Thyroid gland (tissue), 4 donors: ENCODE measurements at regions of chr18 and their contacts with region 1.

Region 1: GRCh38 chr18:50878345-50879301 is at the start of gene ME2:
- DNase-seq: peak; percentile 89 to 90
- H3K4me3 ChIP-seq: peak within 1 kb of the TSS; percentile 72 to 95 (median 88)
- H3K27ac ChIP-seq: peak within 1 kb of the TSS; percentile 97
- H3K4me1 ChIP-seq: peaks cover 0 to 6% of the 10 kb centered on the region in 2 donors
- H3K27me3 ChIP-seq: no peaks in the 10 kb centered on the region
- CTCF ChIP-seq: no peak
- POLR2A ChIP-seq: peak; percentile 80 to 98
- total RNA-seq, gene ME2: 31.9 to 51.5 (median 46.4) TPM

Region 2: GRCh38 chr18:50629148-50629631 is 249.4 kb before region 1 on chr18:
- intact Hi-C with region 1: no loop called
- DNase-seq: no peak
- H3K4me3 ChIP-seq: no peak overlapping the region
- H3K27ac ChIP-seq: no peak overlapping the region
- H3K4me1 ChIP-seq: no peaks in the 10 kb centered on the region
- H3K27me3 ChIP-seq: no peaks in the 10 kb centered on the region
- CTCF ChIP-seq: no peak
- POLR2A ChIP-seq: no peak

Region 3: DNA sequence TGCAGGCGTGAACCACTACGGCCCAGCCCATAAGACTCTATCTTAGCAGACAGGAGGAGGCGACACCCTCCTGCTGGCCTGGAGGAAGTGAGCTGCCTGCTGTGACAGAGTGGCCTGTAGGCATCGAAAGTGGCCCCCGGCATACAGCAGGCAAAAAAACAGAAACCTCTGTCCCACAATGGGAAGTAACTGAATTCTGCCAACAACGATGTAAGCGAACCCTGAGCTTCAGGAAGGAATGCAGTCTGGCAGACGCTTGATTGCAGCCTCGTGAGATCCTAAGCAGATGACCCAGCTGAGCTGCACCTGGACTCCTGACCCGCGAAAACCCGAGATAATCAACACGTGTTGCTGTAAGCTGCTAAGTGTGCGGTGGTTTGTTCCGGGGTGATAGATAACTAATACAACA is 72.4 kb before region 1 on chr18:
- intact Hi-C with region 1: no loop called
- DNase-seq: no peak
- H3K4me3 ChIP-seq: no peak overlapping the region
- H3K27ac ChIP-seq: no peak overlapping the region
- H3K4me1 ChIP-seq: no peaks in the 10 kb centered on the region
- H3K27me3 ChIP-seq: no peaks in the 10 kb centered on the region
- CTCF ChIP-seq: no peak
- POLR2A ChIP-seq: no peak

Region 4: DNA sequence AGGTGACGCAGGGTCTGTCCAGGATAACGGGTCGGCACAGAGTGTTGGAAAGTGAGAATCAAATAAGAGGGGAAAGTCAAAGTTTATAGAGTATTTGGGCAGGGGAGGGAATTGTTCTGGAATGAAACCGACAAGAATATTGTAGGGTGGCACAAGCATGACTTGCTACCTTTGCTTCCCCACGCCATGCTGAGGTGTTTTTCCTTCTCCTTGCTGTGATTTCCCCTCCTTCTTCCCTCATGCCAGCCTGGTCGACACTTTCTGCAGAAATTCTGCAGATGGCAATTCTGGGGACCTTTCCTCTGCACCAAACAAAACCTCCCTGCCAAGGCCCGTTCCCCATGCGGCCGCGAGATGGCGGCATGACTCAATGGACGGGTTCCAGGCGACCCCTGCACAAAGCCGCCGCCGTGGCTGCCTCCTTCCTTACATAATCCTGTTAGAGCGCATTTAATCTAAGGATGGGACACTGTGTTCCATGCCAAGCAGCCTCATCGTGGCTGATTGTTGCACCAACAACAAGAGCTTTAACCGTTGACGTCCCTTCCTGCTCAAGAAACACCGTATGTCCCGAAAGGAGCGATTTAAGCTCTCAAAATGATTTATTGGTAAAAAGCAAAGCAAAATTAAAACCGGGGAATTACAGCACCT is 58.8 kb before region 1 on chr18 and contains the start of gene MRO:
- intact Hi-C with region 1: loop called (anchors 10 kb)
- DNase-seq: peak; percentile 88 to 89
- H3K4me3 ChIP-seq: peak within 1 kb of the TSS in 2 of 3 donors; percentile 4 to 17
- H3K27ac ChIP-seq: peak within 1 kb of the TSS; percentile 71 to 87 (median 83)
- H3K4me1 ChIP-seq: peaks cover 41 to 46% of the 10 kb centered on the region in 2 donors
- H3K27me3 ChIP-seq: no peaks in the 10 kb centered on the region
- CTCF ChIP-seq: peak; percentile 58 to 97 (median 92)
- POLR2A ChIP-seq: no peak
- total RNA-seq, gene MRO: 3.9 to 13.3 (median 11.2) TPM

Region 5: DNA sequence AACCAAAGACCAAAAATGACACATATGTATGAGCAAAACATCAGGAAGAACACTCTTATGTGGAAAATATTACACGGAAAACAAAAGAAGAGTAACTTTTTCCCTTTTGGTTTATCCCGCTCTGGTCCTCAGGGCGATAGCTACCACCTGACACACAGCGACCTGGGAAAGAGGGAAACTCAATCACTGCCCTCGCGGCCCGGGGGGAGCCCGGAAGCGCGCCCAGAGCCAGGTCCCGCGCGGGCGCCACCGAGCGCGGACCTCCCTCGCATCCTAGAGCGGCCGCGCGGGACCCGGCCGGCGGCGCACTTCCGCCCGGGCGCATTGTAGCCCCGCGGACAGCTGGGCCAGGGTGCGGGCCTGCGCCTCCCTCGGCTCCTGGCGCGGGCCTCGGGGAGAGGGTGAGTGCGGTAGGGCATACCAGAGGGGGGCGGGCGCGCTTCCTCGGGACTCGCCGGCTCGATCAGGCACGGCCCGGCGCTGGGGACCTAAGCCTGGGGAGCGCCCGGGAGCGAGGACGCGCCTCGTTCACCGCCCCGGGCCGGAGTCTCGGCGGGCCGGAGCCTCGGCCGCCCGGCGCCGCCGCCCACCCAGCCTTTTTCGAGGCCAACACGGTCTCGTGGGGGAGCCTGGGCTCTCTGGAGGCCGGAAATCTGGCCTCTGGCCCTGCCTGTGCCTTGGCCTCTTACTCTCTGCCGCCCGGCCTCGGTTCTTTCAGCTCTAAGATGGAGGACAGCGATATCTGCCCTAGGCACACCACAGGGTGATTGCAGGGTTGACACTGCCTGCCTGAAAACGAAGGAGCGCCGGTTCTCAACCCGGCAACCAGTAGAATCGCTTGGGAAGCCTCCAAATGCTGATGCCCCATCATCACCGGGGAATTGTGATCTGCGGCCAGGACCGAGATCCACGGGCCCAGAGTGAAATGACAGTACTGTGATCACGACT is 89.4 kb after region 1 on chr18 and contains the start of gene ELAC1:
- intact Hi-C with region 1: loop called (anchors 10 kb)
- DNase-seq: peak; percentile 75 to 82
- H3K4me3 ChIP-seq: peak within 1 kb of the TSS; percentile 91 to 94 (median 93)
- H3K27ac ChIP-seq: peak within 1 kb of the TSS; percentile 96 to 100 (median 99)
- H3K4me1 ChIP-seq: peaks cover 26 to 34% of the 10 kb centered on the region in 2 donors
- H3K27me3 ChIP-seq: no peaks in the 10 kb centered on the region
- CTCF ChIP-seq: no peak
- POLR2A ChIP-seq: peak; percentile 86 to 92
- total RNA-seq, gene ELAC1: 9.3 to 23.5 (median 16.3) TPM

Region 6: DNA sequence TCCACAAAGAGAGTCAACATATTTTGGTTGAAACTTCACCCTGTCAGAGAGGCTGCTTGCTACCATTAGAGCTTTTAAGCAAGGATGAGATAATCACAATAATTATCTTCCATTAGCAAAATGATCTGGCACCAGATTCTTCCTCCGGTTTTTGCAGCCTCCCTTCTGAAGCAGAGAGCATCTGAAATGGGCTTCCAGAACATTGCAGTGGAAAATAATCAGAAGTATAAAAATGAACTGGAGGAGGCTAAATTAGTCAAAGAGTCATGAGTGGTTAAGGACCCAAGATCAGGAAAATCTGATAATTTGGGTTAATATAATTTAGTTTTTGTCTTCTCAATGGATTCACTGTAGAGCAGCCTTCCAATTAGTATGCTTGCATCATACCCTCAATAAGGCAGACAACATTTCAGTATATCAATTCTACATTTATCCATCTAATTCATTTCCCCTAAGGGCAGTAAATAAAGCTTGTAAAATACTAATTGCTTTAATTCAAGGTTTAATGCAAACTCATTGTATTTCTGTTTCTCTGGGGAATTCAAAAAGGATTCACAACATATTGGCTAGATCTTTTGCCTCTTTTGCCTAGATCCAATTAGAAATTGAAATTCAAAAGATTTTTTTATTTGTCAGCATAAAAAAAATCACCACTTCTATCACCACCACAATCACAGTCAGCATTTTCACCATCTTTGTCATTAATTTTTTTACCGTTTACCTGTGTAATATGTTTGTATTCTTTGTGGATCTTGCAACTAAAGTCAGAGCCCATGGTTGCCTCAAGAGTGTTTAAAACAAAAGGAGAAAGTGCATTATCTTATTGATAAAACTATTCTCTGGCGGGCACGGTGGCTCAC is 924.2 kb after region 1 on chr18:
- intact Hi-C with region 1: no loop called
- DNase-seq: no peak
- H3K4me3 ChIP-seq: no peak overlapping the region
- H3K27ac ChIP-seq: no peak overlapping the region
- H3K4me1 ChIP-seq: no peaks in the 10 kb centered on the region
- H3K27me3 ChIP-seq: no peaks in the 10 kb centered on the region
- CTCF ChIP-seq: no peak
- POLR2A ChIP-seq: no peak